Sigmoid colon (tissue), 7 donors: ENCODE measurements at regions of chr7 and their contacts with region 1.

Region 1: GRCh38 chr7:129224251-129225205 is at the start of gene AHCYL2:
- DNase-seq: peak; percentile 98
- H3K4me3 ChIP-seq: peak within 1 kb of the TSS; percentile 58 to 97 (median 80)
- H3K27ac ChIP-seq: peak within 1 kb of the TSS; percentile 90 to 97 (median 94)
- H3K4me1 ChIP-seq: peaks cover 0 to 19% (median 11%) of the 10 kb centered on the region in 4 donors
- H3K27me3 ChIP-seq: no peaks in the 10 kb centered on the region
- CTCF ChIP-seq: no peak
- EP300 ChIP-seq: no peak
- POLR2A ChIP-seq: peak in 1 of 2 donors; percentile 25
- total RNA-seq, gene AHCYL2: 12.5 to 16.8 (median 14.7) TPM

Region 2: DNA sequence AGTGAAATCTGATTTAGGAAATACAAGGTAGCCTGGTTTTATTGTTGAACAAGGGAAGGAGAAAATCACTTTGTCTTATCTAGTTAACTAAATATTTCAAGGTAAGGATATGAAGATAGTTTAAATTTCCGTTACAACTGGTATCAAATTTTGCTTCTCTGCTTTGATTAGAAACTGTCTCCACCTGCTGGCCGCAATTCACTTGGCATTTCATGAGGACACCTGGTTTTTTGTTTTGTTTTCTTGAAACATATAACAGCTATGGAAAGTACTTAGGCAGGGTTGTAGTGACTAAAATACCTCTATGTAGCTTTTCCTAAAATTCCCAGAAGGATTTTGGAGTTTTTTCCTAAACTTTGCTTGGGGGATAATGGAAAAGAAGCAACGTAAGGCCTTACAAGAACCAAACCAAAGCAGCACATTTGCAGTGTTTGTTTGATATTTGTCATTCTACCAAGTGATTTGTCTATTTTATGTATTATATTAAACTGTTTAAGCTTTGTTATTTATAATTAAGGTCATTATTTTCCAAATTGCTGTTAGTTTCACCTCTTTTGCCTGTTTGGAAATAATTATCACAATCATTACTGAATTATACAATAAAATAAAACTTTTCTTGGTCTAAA is 73.9 kb after region 1 on chr7:
- intact Hi-C with region 1: loop called (anchors 2 kb)
- DNase-seq: no peak
- H3K4me3 ChIP-seq: no peak overlapping the region
- H3K27ac ChIP-seq: no peak overlapping the region
- H3K4me1 ChIP-seq: peaks cover 0 to 6% (median 0%) of the 10 kb centered on the region in 4 donors
- H3K27me3 ChIP-seq: no peaks in the 10 kb centered on the region
- CTCF ChIP-seq: peak; percentile 9 to 56 (median 48)
- EP300 ChIP-seq: no peak
- POLR2A ChIP-seq: no peak

Region 3: GRCh38 chr7:129468087-129468486 is 243.6 kb after region 1 on chr7:
- intact Hi-C with region 1: loop called (anchors 5 kb)
- DNase-seq: no peak
- H3K4me3 ChIP-seq: no peak overlapping the region
- H3K27ac ChIP-seq: no peak overlapping the region
- H3K4me1 ChIP-seq: no peaks in the 10 kb centered on the region
- H3K27me3 ChIP-seq: no peaks in the 10 kb centered on the region
- CTCF ChIP-seq: no peak
- EP300 ChIP-seq: no peak
- POLR2A ChIP-seq: no peak

Region 4: DNA sequence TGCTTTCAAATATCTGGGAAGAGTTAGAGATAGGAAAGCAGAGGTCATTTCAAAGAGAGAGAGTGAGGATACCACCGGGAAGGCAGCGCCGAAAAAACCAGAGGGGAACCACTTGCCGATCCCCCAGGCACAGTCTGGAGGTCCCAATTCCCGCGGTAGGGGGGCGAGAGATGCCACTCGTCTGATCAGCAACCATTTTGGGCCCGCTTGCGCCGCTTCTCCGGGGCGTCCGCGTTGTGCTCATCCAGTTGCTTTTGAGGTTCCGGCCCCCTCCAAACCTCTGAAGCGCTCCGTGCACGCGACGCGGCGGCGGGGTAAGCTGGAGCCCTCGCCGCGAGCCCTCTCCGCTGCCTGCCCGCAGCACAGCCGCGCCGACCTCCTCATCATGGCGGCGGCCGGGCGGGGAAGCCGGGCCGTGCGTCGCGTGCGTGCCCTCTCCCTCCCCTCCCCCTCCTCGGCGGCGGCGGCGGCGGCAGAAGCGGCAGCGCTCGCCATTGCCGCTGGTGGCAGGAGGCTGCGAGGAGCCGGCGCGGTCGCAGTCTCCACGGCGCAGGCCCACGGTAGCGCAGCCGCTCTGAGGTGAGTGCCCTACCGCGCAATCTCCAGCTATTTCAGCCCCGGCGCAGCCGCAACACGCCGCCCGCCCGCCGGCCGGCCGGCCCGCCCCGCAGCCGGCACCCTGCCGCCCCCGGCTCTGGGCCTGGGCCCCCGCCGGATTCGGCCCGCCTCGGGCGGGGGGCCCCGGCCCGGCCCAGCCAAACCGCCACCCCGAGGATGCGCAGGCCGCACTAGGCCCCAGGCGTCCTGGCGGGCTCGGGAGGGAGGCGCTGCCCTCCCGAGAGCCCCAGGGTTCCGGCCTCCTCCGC is 387.0 kb after region 1 on chr7 and contains the start of gene NRF1:
- intact Hi-C with region 1: loop called (anchors 10 kb)
- DNase-seq: peak; percentile 92
- H3K4me3 ChIP-seq: peak within 1 kb of the TSS; percentile 73 to 83 (median 74)
- H3K27ac ChIP-seq: peak within 1 kb of the TSS; percentile 93 to 96 (median 94)
- H3K4me1 ChIP-seq: peaks cover 0 to 50% (median 34%) of the 10 kb centered on the region in 4 donors
- H3K27me3 ChIP-seq: no peaks in the 10 kb centered on the region
- CTCF ChIP-seq: no peak
- EP300 ChIP-seq: no peak
- POLR2A ChIP-seq: no peak
- total RNA-seq, gene NRF1: 15.0 to 18.1 (median 17.2) TPM

Region 5: DNA sequence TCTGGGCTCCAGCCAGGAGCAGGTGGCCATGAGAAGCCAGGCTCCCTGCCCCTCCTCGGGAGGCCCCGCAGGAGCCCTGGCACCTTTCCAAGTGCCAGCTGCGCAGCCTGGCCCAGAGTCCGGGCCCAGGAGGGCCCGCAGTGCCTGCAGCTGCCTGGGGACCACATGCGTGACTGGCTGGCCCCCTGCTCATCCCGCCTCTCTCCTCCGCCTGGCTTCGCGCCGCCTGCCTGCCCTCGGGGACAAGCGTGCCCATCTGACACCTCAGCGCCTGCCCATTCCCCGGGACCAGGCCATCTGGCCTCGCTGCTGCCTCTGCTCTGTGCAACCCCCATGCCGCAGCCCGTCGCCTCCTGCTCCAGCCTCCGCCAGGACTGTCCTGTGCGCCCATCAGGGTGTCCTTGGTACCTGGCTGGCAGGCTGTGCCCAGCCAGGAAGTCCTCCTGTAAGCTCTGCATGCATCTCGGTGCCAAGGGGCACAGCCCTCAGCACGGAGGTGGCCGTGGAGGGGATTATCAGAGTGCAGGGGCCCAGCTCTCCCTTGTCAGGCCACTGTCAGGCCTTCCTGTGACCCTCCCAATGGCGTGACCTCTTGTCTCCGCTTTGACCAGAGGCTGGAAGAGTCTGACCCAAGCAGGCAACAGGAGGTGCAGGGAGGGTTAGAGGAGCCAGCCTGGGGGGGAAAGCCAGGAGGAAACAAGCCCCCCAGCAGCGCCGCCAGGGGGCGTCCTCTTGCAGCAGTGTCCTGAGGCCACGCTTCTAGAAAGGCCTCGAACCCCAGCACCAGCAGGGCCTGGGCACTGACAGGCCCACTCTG is 930.2 kb after region 1 on chr7:
- intact Hi-C with region 1: no loop called
- DNase-seq: no peak
- H3K4me3 ChIP-seq: no peak overlapping the region
- H3K27ac ChIP-seq: no peak overlapping the region
- H3K4me1 ChIP-seq: peaks cover 0 to 5% (median 0%) of the 10 kb centered on the region in 4 donors
- H3K27me3 ChIP-seq: peaks cover 0 to 8% (median 0%) of the 10 kb centered on the region in 3 donors
- CTCF ChIP-seq: no peak
- EP300 ChIP-seq: no peak
- POLR2A ChIP-seq: no peak

Region 6: GRCh38 chr7:130668257-130669084 is 1443.9 kb after region 1 on chr7 and contains the start of gene COPG2:
- intact Hi-C with region 1: loop called (anchors 10 kb)
- DNase-seq: peak; percentile 88
- H3K4me3 ChIP-seq: peak within 1 kb of the TSS; percentile 71 to 91 (median 77)
- H3K27ac ChIP-seq: peak within 1 kb of the TSS; percentile 83 to 88 (median 84)
- H3K4me1 ChIP-seq: peaks cover 0 to 16% (median 6%) of the 10 kb centered on the region in 4 donors
- H3K27me3 ChIP-seq: no peaks in the 10 kb centered on the region
- CTCF ChIP-seq: no peak
- EP300 ChIP-seq: no peak
- POLR2A ChIP-seq: no peak
- total RNA-seq, gene COPG2: 11.7 to 15.5 (median 12.8) TPM